Naive thymus-derived CD8-positive, alpha-beta T cell (primary cell): ENCODE measurements at regions of chr1 and their contacts with region 1.

Region 1: DNA sequence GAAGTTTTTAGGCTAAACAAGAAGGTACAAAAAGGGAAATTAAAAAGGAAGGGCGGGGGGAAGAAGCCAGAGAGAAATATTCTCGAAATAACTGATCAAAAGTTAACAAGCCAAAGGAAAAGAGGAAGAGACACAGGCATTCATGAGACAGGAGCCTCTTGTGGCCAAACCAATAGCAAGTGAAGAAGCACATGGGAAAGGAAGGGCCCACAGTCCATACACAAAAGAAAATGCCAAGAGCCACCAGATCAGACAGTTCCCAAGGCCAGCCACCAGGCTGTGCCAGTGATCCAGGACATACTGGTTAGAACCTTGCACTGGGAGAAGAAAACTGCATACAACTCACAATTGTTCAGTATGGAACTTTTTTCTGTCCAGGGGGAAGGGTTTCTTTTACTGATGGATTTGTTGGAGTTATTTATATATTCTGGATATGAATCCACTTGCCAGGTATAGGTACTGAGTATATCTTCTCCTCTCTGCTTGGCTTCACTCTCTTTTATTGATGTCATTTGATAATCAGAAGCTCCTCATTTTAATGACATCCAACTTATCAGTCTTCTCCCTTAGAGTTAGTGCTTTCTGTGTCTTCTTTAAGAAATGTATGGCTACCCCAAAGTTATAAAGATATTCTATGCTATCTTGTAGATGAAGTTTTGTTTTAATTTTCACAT is 76.8 kb downstream of the CD46 start:
- DNase-seq: peak; percentile 32 to 75 (median 48)
- ATAC-seq: peak in 1 of 2 donors; percentile 7
- H3K4me3 Mint-ChIP-seq: peak overlapping the region in 3 of 10 donors; percentile 11 to 25 (median 22)
- H3K27ac Mint-ChIP-seq: peak overlapping the region; percentile 66 to 100 (median 90)
- H3K4me1 Mint-ChIP-seq: peaks cover 55 to 99% (median 95%) of the 10 kb centered on the region in 4 donors
- H3K27me3 Mint-ChIP-seq: peaks cover 0 to 6% (median 2%) of the 10 kb centered on the region in 5 donors

Region 2: GRCh38 chr1:207486198-207486597 is 342.4 kb before region 1 on chr1:
- POLR2A ChIA-PET with region 1: no interaction called
- DNase-seq: no peak
- ATAC-seq: no peak
- H3K4me3 Mint-ChIP-seq: no peak overlapping the region
- H3K27ac Mint-ChIP-seq: no peak overlapping the region
- H3K4me1 Mint-ChIP-seq: peaks cover 0 to 5% (median 0%) of the 10 kb centered on the region in 4 donors
- H3K27me3 Mint-ChIP-seq: no peaks in the 10 kb centered on the region

Region 3: DNA sequence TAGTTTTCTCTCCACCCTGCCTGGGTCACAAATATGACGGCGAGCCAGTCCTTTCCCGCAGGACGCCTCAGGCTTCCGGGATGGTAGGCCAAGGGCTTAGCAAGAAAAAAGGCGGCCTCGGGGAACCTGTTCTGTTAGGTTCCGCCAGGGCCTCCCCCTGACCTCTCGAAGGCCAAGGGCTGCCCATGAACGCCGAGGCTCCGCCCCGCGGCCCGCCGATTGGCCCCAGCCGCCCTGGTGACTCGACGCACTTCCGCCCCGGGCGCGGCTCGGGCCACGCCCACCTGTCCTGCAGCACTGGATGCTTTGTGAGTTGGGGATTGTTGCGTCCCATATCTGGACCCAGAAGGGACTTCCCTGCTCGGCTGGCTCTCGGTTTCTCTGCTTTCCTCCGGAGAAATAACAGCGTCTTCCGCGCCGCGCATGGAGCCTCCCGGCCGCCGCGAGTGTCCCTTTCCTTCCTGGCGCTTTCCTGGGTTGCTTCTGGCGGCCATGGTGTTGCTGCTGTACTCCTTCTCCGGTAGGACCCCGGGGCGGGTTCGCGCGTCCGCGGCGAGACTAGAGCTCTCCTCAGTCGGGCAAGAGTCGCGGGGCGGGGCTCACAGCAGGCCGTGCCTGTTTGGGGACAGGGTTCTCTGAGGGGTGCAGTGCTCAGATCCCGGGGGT is 76.7 kb before region 1 on chr1 and contains the start of gene CD46:
- POLR2A ChIA-PET with region 1: interaction called, 19 read pairs
- DNase-seq: peak; percentile 88 to 96 (median 92)
- ATAC-seq: peak; percentile 94
- H3K4me3 Mint-ChIP-seq: peak within 1 kb of the TSS; percentile 96 to 100 (median 99)
- H3K27ac Mint-ChIP-seq: peak within 1 kb of the TSS; percentile 96 to 99 (median 98)
- H3K4me1 Mint-ChIP-seq: peaks cover 44 to 85% (median 84%) of the 10 kb centered on the region in 4 donors
- H3K27me3 Mint-ChIP-seq: no peaks in the 10 kb centered on the region
- polyA plus RNA-seq, gene CD46: 112 to 137 (median 123) TPM

Region 4: GRCh38 chr1:207766569-207766968 is 62.1 kb before region 1 on chr1:
- POLR2A ChIA-PET with region 1: no interaction called
- DNase-seq: no peak
- ATAC-seq: no peak
- H3K4me3 Mint-ChIP-seq: no peak overlapping the region
- H3K27ac Mint-ChIP-seq: peak overlapping the region in 1 of 10 donors; percentile 44
- H3K4me1 Mint-ChIP-seq: peaks cover 2 to 10% (median 7%) of the 10 kb centered on the region in 4 donors
- H3K27me3 Mint-ChIP-seq: no peaks in the 10 kb centered on the region

Region 5: DNA sequence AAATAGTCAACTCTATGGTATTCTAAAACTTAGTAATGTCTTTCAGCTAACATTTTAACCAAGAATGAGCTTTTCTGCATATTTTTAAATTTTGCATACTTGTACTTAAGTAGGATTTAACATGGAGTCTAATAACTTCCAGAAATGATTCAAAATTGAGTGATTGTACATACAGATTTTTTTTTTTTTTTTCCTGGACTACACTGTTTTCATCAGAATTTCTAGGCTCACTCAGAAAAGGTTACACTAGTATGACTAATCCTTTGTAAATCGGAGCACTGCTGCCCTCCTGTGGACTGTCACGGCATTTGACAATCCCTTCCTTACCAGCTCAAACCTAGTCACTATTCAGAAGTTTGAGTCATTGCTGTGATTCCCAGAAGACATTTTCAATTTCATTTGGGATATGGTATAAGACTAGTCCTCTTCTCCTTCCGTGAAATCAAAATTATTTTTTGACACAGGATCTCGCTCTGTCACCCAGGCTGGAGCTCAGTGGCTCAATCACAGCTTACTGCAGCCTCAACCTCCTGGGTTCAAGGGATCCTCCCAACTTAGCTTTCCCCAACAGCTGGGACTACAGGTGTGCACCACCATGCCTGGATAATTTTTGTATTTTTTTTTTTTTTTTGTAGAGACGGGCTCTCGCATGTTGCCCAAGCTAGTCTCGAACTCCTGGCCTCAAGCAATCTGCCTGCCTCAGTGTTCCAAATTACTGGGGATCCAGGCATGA is 31.2 kb before region 1 on chr1:
- POLR2A ChIA-PET with region 1: interaction called, 21 read pairs
- DNase-seq: peak; percentile 50 to 87 (median 66)
- ATAC-seq: peak; percentile 75 to 80
- H3K4me3 Mint-ChIP-seq: peak overlapping the region in 2 of 10 donors; percentile 18 to 35
- H3K27ac Mint-ChIP-seq: peak overlapping the region in 5 of 10 donors; percentile 12 to 73 (median 44)
- H3K4me1 Mint-ChIP-seq: peaks cover 24 to 52% (median 45%) of the 10 kb centered on the region in 4 donors
- H3K27me3 Mint-ChIP-seq: no peaks in the 10 kb centered on the region

Region 6: DNA sequence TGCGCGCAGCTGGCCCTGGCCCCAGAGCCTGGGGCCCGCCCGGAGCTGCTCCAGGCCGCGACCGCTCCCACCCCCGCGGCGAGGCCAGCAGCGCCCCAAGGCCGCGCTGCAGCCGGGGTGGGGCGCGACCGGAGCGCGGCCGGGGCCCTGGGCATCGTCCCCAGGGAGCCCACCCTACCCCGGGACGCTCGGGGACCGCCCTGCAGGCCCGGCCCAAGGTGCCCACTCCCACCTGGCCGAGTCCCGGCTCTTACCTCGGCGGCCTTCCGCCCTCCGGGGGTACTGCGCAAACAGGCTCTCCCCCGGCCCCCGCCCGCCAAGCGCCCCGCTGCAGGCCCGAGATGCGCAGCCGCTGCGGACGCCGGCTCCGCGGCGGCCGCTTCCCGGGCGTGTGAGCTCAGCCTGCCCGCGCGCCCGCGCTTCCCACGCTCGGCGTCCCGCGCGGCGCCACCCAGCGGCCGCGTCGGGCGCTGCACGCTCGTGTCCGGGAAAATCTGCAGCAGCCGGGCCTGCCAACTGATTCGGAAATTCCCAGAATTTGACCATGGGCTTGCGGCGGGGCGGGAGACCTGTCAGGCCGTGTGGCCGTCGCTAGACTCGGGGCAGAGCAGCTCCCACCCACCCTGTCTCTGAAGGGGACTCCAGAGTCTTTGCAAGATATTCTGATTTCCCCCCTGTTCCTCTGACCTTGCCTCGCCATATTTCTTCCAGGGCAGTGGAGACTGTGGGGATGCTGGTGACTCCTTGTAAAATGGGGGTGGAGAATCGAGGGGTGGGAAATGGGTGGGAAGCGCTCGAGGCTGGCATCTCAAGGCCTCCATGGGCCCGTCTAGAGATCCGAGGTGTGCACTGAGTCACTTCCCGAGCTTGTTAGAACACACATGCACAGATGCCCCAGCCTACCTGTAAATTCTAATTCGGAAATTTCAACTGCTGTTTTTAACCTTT is 40.4 kb after region 1 on chr1:
- POLR2A ChIA-PET with region 1: interaction called, 462 read pairs
- DNase-seq: peak; percentile 49 to 86 (median 74)
- ATAC-seq: peak; percentile 58 to 63
- H3K4me3 Mint-ChIP-seq: peak overlapping the region; percentile 92 to 98 (median 95)
- H3K27ac Mint-ChIP-seq: peak overlapping the region; percentile 89 to 98 (median 94)
- H3K4me1 Mint-ChIP-seq: peaks cover 69 to 88% (median 86%) of the 10 kb centered on the region in 4 donors
- H3K27me3 Mint-ChIP-seq: no peaks in the 10 kb centered on the region

Region 7: DNA sequence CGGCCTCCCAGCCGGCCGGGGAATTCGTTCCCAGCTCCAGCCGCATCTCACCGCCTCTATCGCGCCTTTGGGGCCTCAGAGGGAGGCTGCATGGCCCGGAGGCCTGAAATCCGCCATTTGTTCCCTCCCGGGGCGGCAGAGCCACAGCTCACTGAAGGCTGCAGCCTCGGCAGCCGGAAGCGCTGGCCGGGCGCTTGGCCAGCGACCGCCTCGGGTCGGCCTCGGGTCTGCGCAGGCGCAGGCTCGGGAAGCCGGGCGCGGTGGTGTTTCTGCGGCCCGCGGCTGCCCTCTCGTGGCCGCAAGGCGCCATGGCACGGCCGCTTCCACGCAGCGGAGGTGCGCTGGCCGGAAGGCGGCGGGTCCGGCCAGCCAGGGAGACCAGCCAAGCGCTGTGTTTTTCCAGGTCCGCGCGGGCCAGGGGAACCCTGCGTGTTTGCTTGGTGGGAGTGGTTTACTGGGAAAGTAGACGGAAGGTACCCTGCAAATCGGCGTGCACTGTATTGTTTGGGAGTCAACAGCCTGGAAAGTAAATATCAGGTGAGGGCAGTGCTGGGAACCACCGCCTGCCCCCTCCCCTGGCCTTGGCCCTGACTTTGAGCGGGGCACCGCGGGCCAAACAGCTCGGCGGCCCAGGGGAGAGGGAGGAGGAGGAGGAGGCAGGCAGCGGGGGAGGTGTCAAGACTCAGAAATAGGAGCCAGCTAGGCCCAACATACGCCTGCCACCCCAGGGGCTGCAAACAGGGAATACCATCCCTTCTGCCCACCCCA is 135.0 kb after region 1 on chr1:
- POLR2A ChIA-PET with region 1: interaction called, 15 read pairs
- DNase-seq: peak; percentile 66 to 89 (median 84)
- ATAC-seq: peak; percentile 81 to 83
- H3K4me3 Mint-ChIP-seq: peak overlapping the region; percentile 71 to 90 (median 84)
- H3K27ac Mint-ChIP-seq: peak overlapping the region in 8 of 10 donors; percentile 37 to 82 (median 62)
- H3K4me1 Mint-ChIP-seq: peaks cover 10 to 19% (median 15%) of the 10 kb centered on the region in 4 donors
- H3K27me3 Mint-ChIP-seq: peaks cover 4 to 31% (median 23%) of the 10 kb centered on the region in 5 donors